Colonic mucosa (tissue), 4 donors: ENCODE measurements at regions of chrX and their contacts with region 1.

Region 1: GRCh38 chrX:81377329-81377728 is 175.4 kb downstream of the SH3BGRL start:
- DNase-seq: no peak
- H3K4me3 ChIP-seq: no peak overlapping the region
- H3K27ac ChIP-seq: no peak overlapping the region
- H3K4me1 ChIP-seq: no peaks in the 10 kb centered on the region
- H3K27me3 ChIP-seq: no peaks in the 10 kb centered on the region
- CTCF ChIP-seq: peak; percentile 58

Region 2: DNA sequence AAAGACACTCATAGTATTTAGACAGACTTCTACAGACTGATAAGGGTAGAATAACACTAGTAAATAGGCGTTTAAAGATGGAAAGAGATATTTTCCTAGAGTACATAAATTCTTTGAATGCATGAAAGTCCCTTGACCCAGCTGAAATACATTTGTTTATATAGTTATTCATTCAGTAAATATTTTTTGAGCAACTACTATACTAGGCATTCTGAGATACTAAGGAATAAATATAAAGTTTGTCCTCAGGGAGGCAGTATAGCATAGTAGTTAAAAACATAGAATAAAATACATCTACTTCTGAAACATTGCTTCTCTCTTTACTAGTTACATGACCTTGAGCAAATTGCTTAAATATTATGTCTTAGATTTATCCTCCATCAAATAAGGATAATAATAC is 203.0 kb before region 1 on chrX:
- intact Hi-C with region 1: loop called (anchors 10 kb)
- DNase-seq: no peak
- H3K4me3 ChIP-seq: no peak overlapping the region
- H3K27ac ChIP-seq: no peak overlapping the region
- H3K4me1 ChIP-seq: no peaks in the 10 kb centered on the region
- H3K27me3 ChIP-seq: no peaks in the 10 kb centered on the region
- CTCF ChIP-seq: no peak